Right ventricle myocardium inferior (tissue), 1 donor: ENCODE measurements at regions of chr2 and their contacts with region 1.

Region 1: GRCh38 chr2:20962939-20963557 is 80.8 kb downstream of the APOB start:
- DNase-seq: no peak
- ATAC-seq: peak; percentile 56

Region 2: GRCh38 chr2:20661067-20661980 is 301.7 kb before region 1 on chr2:
- intact Hi-C with region 1: loop called (anchors 1 kb)
- DNase-seq: peak; percentile 60
- ATAC-seq: peak; percentile 72

Region 3: DNA sequence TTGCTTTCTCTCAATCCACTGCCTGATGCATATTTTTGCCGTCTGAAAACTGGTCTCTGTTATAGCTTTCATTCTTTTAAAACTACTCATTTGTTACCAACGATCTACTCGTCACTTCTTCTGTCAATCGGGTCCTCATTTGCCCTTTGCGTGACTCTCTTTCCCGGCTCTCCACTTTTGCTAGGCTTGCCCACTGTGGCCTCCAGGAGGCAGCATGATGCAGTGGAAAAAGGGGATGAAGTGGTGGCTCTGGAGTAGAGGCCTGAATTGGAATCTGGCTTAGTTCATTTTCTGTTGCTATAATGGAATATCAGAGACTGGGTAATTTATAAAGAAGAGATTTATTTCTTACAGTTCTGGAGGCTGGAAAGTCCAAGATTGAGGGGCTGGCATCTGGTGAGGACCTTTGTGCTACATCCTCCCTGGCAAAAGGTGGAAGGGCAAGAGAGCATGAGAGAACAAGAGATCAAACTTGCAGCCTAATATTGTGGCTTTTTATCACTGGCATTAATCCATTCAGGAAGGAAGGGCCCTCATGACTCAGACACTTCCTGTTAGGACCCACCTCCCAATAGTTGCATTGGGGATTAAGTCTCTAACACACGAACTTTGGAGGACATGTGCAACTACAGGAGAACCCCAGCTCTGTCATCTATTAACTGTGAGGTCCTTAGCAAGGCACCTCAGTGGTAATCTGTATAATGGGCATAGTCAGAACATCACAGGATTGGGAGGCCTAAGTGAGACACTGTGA is 280.7 kb before region 1 on chr2:
- intact Hi-C with region 1: loop called (anchors 5 kb)
- DNase-seq: no peak
- ATAC-seq: no peak

Region 4: DNA sequence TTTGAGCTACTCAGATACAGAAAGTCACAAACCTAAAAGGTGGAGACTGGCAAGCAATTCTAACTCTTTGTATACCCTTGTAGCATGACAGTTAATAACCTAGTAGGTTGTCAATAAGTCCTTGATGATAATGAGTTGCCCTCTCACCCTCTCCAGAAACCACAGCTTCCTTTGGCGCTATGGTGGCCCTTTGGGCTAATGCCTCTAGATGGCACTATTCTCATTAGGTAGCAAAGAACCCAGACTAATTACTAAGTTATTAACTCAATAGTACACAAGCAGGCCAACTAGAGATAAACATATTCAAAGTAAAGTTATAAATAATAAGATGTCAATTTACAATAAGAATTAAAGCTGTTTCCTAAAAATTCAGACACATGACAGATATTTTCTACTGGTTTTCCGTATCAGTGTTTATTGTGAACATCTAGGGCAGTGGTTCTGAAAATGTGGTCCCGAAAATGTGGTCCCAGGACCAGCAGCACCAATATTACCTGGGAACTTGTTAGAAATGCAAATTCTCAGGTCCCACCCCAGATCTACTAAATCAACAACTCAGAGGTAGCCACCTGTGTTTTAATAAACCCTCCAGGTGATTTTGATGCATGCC is 181.3 kb before region 1 on chr2:
- intact Hi-C with region 1: loop called (anchors 5 kb)
- DNase-seq: no peak
- ATAC-seq: no peak